ENCODE measurements at regions of chr11 and their contacts with region 1.

Region 1: DNA sequence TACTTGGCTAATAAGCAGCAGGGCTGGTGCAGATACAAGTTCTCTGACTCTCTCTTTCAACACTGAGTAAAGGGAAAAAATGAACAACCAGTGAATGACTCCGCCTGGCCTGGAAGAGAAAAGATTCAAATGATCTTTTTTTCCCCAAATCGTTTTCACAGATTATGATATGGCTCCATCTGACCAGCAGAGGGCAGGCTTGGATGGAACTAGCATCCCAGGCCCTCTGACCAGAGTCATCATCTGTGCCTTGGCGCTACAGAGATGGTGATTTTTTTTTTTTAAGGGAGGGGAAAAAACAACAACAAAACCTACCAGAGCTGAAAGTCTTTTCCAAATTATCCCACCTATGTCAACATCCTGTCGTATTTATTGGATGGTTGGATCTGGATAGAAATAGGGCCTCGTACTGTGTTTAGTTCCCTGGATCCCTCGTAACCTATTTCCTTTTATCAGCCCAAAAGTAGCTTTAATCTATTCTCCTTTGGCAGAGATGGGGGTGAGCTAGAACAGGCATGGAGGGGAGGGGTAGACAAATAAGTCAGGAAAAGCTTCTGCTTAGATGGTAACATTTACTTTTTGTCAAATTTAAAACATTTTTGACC is 69.7 kb downstream of the PRSS23 start:
- DNase-seq: peak; percentile 70 to 82 (median 71)
- ATAC-seq: peak; percentile 80 to 90
- H3K4me3 ChIP-seq: no peak overlapping the region
- H3K27ac ChIP-seq: no peak overlapping the region
- H3K4me1 ChIP-seq: no peaks in the 10 kb centered on the region
- H3K27me3 ChIP-seq: no peaks in the 10 kb centered on the region

Region 2: DNA sequence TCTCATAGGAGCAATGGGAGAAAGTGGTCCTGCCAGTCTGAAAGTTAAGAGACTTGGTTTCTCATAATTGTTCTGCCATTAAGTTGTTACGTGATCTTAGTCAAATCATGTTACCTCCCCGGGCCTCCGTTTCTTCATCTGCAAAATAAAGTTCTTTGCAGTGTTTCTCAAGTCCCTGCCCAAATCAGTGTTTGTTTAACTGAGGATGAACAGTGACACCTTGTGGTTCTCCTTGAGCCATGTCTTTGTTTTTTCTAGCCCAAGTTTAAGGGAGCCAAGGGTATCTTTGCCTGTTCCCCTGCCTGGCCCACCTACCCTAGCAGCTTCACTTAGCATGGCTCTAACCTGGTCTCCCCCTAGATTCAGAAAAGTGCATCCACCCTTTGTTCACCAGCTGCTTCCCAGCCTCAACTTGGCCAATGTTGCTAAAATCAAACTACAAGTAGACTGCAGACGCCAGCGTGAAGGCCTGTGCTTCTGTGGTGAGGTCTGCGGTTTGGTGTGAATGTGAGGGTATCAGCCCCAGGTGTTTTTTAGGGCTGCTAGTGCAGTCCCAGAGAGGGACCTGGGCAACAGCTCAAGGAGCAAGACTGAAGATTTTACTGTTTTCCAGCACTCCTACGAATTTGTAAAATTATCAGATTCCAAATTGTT is 49.6 kb after region 1 on chr11:
- intact Hi-C with region 1: loop called (anchors 2 to 5 kb)
- DNase-seq: no peak
- ATAC-seq: peak; percentile 61 to 71
- H3K4me3 ChIP-seq: no peak overlapping the region
- H3K27ac ChIP-seq: peak overlapping the region; percentile 75
- H3K4me1 ChIP-seq: peaks cover 4% of the 10 kb centered on the region
- H3K27me3 ChIP-seq: no peaks in the 10 kb centered on the region

Region 3: GRCh38 chr11:87281496-87281895 is 411.4 kb after region 1 on chr11:
- intact Hi-C with region 1: loop called in 1 of 4 experiments (anchors 10 kb)
- DNase-seq: no peak
- ATAC-seq: peak; percentile 75 to 89
- H3K4me3 ChIP-seq: no peak overlapping the region
- H3K27ac ChIP-seq: no peak overlapping the region
- H3K4me1 ChIP-seq: no peaks in the 10 kb centered on the region
- H3K27me3 ChIP-seq: no peaks in the 10 kb centered on the region

Region 4: DNA sequence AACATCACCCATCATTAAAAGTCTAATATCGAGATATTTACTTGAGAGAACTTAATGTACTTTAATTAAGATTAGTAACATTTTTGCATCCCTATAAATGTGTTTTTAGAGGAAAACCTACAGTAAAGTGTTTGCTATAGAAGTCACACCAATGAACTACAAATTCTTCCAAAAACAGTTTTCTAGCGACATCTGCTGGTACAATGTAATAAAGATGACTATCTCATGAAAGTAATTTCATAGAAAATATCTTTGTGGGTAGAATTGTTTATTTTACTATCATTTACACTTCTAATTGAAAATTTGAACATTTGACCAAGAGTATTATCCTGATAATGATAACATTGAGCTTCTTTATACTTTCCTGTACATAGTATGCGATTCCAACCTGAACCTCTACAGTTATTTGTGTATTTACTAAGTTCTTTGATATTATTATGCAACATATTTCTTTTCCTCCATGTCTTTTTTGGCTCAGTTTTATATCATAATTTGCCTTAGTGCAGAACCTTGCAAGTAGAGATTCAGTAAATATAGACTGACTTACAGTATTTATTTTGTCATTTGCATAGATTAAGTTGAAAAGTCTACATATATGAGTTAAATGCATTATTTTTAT is 420.3 kb after region 1 on chr11:
- intact Hi-C with region 1: loop called in 2 of 4 experiments (anchors 10 kb)
- DNase-seq: no peak
- ATAC-seq: no peak
- H3K4me3 ChIP-seq: no peak overlapping the region
- H3K27ac ChIP-seq: no peak overlapping the region
- H3K4me1 ChIP-seq: no peaks in the 10 kb centered on the region
- H3K27me3 ChIP-seq: no peaks in the 10 kb centered on the region

Measured in right cardiac atrium (tissue), 5 donors.